ENCODE measurements at regions of chr3 and their contacts with region 1.

Region 1: GRCh38 chr3:44761424-44762169 is at the starts of genes KIAA1143 and KIF15:
- DNase-seq: peak; percentile 97
- H3K4me3 ChIP-seq: peak within 1 kb of the TSS; percentile 84
- H3K27ac ChIP-seq: peak within 1 kb of the TSS; percentile 62
- H3K4me1 ChIP-seq: peaks cover 12% of the 10 kb centered on the region
- CTCF ChIP-seq: peak; percentile 66
- total RNA-seq, gene KIAA1143: 17.2 and 18.7 TPM in 2 replicates
- total RNA-seq, gene KIF15: 44.9 and 51.8 TPM in 2 replicates

Region 2: GRCh38 chr3:44338010-44338827 is 423.4 kb before region 1 on chr3 and contains the start of gene TCAIM:
- CTCF ChIA-PET with region 1: no interaction called
- POLR2A ChIA-PET with region 1: interaction called, 10 read pairs
- intact Hi-C with region 1: loop called (anchors 1 kb)
- DNase-seq: peak; percentile 98
- H3K4me3 ChIP-seq: peak within 1 kb of the TSS; percentile 82
- H3K27ac ChIP-seq: peak within 1 kb of the TSS; percentile 71
- H3K4me1 ChIP-seq: peaks cover 23% of the 10 kb centered on the region
- CTCF ChIP-seq: no peak
- total RNA-seq, gene TCAIM: 15.2 and 17.9 TPM in 2 replicates

Region 3: DNA sequence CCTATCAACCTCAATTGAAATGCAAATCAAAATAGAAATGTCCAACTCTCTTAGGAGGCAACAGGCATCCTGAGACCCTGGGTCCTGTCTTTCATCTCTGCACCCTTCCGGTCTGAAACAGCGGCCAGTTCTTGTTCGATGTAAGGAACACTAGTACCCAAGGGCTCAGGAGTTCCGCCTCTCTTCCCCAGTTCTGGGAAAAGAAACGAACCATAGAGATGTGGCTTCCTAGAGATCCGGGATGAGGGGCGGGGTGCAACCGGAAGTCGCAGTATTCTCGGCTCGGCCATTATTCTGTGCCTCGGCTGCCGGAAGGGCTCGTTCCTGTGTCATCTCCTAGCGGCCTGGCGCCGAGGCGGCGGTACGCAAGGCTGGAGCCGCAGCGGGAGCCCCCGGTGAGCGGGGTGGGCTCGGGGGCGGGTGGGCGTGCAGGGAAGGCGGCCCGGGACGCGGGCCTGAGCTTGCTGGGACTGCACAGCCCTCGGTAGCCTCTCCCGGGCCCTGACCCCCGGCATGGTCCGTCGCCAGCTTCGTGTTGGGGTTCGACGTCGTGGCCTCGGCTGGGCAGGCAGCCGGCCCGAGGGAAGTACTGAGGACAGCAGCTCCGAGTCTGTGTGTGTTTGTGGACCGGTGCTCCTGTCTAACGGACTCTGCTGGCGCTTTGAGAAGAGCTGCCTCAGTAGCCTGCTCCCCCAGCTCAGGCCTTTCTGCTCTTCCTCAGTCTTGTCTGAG is 136.7 kb before region 1 on chr3 and contains the start of gene ZNF197:
- CTCF ChIA-PET with region 1: no interaction called
- POLR2A ChIA-PET with region 1: no interaction called
- intact Hi-C with region 1: loop called (anchors 5 kb)
- DNase-seq: peak; percentile 66
- H3K4me3 ChIP-seq: peak within 1 kb of the TSS; percentile 72
- H3K27ac ChIP-seq: peak within 1 kb of the TSS; percentile 4
- H3K4me1 ChIP-seq: peaks cover 7% of the 10 kb centered on the region
- CTCF ChIP-seq: no peak
- total RNA-seq, gene ZNF197: 2.8 and 4.4 TPM in 2 replicates

Region 4: GRCh38 chr3:44729384-44729910 is 32.1 kb before region 1 on chr3 and contains the start of gene ZNF501:
- CTCF ChIA-PET with region 1: no interaction called
- POLR2A ChIA-PET with region 1: interaction called, 3 read pairs
- intact Hi-C with region 1: loop called (anchors 1 kb)
- DNase-seq: peak; percentile 78
- H3K4me3 ChIP-seq: peak within 1 kb of the TSS; percentile 66
- H3K27ac ChIP-seq: no peak within 1 kb of the TSS
- H3K4me1 ChIP-seq: no peaks in the 10 kb centered on the region
- CTCF ChIP-seq: no peak
- total RNA-seq, gene ZNF501: 2.1 and 3.4 TPM in 2 replicates

Region 5: GRCh38 chr3:44814751-44815150 is 53.2 kb after region 1 on chr3:
- CTCF ChIA-PET with region 1: no interaction called
- POLR2A ChIA-PET with region 1: no interaction called
- intact Hi-C with region 1: no loop called
- DNase-seq: no peak
- H3K4me3 ChIP-seq: no peak overlapping the region
- H3K27ac ChIP-seq: no peak overlapping the region
- H3K4me1 ChIP-seq: no peaks in the 10 kb centered on the region
- CTCF ChIP-seq: no peak

Region 6: DNA sequence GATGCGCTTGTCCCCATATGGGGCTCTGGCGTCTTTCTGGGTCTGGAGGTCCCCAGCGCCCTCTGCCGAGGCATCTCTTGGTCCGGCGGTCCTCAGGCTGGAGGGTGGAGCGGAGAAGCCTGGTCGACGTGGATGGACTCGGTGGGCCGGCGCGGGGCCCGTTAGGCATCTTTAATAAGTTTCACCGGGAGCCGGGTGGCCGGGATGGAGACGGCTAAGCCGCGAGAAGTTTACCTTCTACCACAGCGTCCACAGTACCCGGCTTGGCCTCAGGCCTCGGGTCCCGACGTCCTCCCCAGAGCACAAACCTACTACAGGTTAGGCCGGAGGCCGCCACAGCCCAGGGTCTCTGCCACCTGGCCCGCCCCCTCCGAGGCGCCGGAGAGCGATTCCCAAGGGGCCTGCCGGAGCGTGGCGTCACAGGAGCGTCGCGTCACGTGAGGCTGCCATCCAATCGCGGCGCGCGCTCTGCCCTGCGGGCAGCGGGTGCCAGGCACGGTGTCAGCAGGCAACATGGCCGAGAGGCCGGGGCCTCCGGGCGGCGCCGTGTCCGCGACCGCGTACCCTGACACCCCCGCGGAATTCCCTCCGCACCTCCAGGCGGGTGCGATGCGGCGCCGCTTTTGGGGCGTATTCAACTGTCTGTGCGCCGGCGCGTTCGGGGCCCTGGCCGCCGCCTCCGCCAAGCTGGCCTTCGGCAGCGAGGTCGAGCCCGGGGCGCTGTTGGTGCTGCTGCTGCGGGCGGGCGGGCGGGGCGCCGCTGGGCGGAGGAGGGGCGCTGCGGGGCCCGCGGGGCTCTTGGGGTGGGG is 100.0 kb after region 1 on chr3 and contains the start of gene TMEM42:
- CTCF ChIA-PET with region 1: no interaction called
- POLR2A ChIA-PET with region 1: no interaction called
- intact Hi-C with region 1: loop called (anchors 1 kb)
- DNase-seq: peak; percentile 93
- H3K4me3 ChIP-seq: peak within 1 kb of the TSS; percentile 78
- H3K27ac ChIP-seq: no peak within 1 kb of the TSS
- H3K4me1 ChIP-seq: peaks cover 13% of the 10 kb centered on the region
- CTCF ChIP-seq: no peak
- total RNA-seq, gene TMEM42: 21.2 and 24.6 TPM in 2 replicates

Region 7: GRCh38 chr3:44969169-44969827 is 207.7 kb after region 1 on chr3:
- CTCF ChIA-PET with region 1: no interaction called
- POLR2A ChIA-PET with region 1: no interaction called
- intact Hi-C with region 1: loop called (anchors 2 kb)
- DNase-seq: peak; percentile 69
- H3K4me3 ChIP-seq: peak overlapping the region; percentile 26
- H3K27ac ChIP-seq: peak overlapping the region; percentile 75
- H3K4me1 ChIP-seq: peaks cover 60% of the 10 kb centered on the region
- CTCF ChIP-seq: peak; percentile 63

Region 8: DNA sequence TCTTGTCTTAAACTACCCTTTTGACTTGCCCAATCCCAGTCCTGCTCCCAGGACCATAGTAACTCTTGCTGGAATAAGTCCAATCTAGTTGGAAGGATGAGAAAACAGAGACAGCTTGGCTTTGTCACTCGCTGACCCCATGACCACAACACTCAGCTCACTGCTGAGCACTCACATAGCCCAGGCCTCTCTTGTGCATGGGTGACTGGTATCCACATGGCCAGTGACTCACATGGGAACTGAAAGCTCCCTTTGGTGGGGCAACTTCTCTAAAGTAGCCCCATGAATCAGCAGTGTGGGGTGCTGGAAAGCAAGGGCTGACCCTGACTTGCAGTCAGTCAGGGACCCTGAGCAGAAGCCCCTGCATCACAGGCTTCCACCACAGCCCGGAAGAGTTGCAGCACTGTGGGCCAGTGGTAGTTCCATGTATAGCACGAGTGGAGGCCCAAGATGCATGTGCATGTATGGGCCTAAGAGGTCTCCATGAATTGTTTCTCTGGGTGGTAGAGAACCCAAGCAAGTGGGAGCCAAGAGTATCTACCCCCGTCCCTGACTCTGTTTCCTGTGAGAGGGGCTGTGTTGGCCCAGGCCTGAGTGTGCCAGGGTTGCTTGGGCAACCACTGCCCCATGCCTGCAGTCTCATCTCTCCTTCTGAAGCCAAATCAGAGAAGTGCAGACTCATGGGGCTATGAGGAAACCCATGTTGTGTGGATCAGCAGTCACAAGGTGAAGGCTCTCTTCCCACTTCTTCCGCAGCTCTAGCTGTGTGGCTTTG is 1327.8 kb after region 1 on chr3:
- CTCF ChIA-PET with region 1: no interaction called
- POLR2A ChIA-PET with region 1: no interaction called
- intact Hi-C with region 1: loop called (anchors 10 kb)
- DNase-seq: no peak
- H3K4me3 ChIP-seq: no peak overlapping the region
- H3K27ac ChIP-seq: no peak overlapping the region
- H3K4me1 ChIP-seq: peaks cover 36% of the 10 kb centered on the region
- CTCF ChIP-seq: no peak

Measured in OCI-LY7 (cell line).